ENCODE measurements at regions of chr15 and their contacts with region 1.

Region 1: DNA sequence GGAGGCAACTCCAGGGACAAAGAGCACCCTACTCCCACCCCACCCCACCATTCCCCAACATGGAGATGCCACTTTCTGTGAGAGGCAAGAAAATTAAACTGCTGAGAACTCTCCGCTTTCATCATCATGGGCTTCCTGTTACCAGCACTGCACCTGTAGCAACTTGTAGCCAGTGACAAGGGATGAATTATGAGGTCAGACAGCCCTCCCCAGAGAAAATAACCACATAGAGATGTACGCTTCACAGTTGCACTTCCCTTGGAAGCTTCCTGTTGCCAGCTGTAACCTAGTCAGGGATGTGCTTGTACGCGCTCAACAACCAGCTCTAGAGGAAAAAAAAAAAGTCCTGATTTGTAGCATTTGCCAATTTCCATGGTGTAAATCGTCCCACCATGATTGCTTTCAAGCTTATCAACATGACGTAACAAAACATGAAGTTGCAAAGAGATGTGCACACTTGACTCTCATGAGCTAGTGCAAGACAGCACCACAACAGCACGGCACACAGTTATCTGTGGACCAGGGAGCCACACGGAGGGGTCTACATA is 145.4 kb downstream of the RAB11A start:
- DNase-seq: no peak
- ATAC-seq: no peak
- H3K4me3 ChIP-seq: no peak overlapping the region
- H3K27ac ChIP-seq: no peak overlapping the region
- H3K4me1 ChIP-seq: no peaks in the 10 kb centered on the region
- H3K27me3 ChIP-seq: no peaks in the 10 kb centered on the region
- CTCF ChIP-seq: no peak
- POLR2A ChIP-seq: no peak

Region 2: GRCh38 chr15:65888981-65889380 is 125.7 kb before region 1 on chr15:
- intact Hi-C with region 1: no loop called
- DNase-seq: no peak
- ATAC-seq: no peak
- H3K4me3 ChIP-seq: no peak overlapping the region
- H3K27ac ChIP-seq: no peak overlapping the region
- H3K4me1 ChIP-seq: no peaks in the 10 kb centered on the region
- H3K27me3 ChIP-seq: no peaks in the 10 kb centered on the region
- CTCF ChIP-seq: no peak
- POLR2A ChIP-seq: no peak

Region 3: DNA sequence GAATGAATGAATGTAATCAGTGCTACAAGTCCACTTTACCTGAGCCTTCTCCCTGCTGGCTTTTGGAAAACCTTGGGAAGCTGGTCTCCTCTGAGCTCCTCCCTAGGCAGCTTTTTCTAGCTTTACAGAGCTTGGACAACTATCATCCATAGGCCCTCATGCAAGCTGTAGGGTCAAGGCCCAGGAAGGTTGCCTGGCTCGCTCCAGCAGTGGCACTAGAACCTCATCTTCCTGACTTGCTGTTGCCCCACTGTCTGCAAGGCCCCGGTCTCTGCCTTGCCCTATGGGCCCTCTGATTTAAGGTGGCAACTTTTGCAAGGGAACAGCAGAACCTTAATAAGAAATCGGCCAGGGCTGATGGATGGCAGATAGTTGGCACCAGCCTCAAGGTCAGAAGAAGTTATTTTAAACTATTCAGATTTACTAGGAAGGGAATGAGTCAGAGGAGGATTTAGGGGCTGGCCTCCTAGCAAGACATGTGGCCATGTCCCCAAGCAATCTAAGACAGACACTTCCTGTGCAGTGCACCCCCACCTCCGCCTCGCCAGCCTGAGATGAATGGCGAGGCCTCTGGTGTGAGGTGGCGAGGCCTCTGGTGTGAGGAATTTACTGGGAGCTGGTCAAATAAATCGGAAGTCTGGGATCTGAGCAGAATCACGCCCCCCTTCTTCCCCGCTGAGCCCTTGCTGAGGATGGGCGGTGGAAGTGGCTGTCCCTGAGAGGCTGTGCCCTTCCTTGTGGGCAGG is 58.1 kb after region 1 on chr15:
- intact Hi-C with region 1: loop called in 1 of 2 experiments (anchors 10 kb)
- DNase-seq: peak in 1 of 3 donors; percentile 23
- ATAC-seq: no peak
- H3K4me3 ChIP-seq: no peak overlapping the region
- H3K27ac ChIP-seq: no peak overlapping the region
- H3K4me1 ChIP-seq: no peaks in the 10 kb centered on the region
- H3K27me3 ChIP-seq: no peaks in the 10 kb centered on the region
- CTCF ChIP-seq: no peak
- POLR2A ChIP-seq: no peak

Region 4: DNA sequence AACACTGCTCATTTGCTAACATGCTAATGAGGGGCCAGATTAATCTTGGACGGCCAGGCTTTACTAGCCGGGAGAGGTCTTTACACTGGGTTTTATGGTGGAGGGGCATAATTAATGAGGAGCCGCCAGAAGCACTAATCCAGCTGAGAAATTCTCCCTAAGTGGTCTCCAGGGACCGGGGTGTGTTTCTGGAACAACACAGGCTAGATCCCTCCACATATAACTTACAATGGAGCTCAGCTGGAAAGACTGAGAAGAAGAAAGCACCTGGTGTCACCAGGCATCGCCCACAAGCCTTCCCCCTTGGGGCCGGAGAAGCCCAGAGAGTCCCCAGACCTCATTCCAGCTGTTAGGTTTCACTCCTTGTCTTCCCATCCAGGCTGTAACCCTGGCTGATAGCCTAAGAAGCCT is 111.3 kb after region 1 on chr15:
- intact Hi-C with region 1: no loop called
- DNase-seq: no peak
- ATAC-seq: no peak
- H3K4me3 ChIP-seq: no peak overlapping the region
- H3K27ac ChIP-seq: no peak overlapping the region
- H3K4me1 ChIP-seq: no peaks in the 10 kb centered on the region
- H3K27me3 ChIP-seq: no peaks in the 10 kb centered on the region
- CTCF ChIP-seq: no peak
- POLR2A ChIP-seq: no peak

Measured in right lobe of liver (tissue), 6 donors.